Posterior vena cava (tissue), 2 donors: ENCODE measurements at regions of chr9 and their contacts with region 1.

Region 1: GRCh38 chr9:99999797-100000196 is 93.3 kb downstream of the STX17 start:
- DNase-seq: no peak

Region 2: DNA sequence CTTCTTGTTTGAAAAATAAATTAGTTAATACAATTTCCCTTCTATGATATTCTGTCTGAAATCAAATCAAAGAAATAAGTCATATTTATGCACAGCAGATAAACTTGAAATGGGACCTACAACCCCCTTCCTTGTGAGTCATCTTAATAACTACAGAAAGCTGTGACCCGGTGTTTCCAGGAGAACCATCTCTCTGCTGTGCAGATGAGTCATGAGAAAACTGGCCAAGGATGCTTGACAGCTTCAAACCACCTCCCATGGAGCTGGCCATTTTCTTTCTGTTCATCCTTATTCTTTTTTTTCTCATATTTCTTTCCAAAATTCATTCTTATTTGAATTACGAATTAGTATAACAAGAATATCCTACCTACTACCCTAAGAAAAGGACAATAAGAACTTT is 221.5 kb before region 1 on chr9:
- intact Hi-C with region 1: loop called in 1 of 2 experiments (anchors 10 kb)
- DNase-seq: no peak

Region 3: GRCh38 chr9:100052375-100052774 is 52.6 kb after region 1 on chr9:
- intact Hi-C with region 1: no loop called
- DNase-seq: no peak